AG04449 (cell line): ENCODE measurements at regions of chr3 and their contacts with region 1.

Region 1: GRCh38 chr3:133426721-133427120 is 26.9 kb downstream of the BFSP2 start:
- DNase-seq: peak; percentile 64
- H3K4me3 ChIP-seq: no peak overlapping the region
- CTCF ChIP-seq: no peak

Region 2: DNA sequence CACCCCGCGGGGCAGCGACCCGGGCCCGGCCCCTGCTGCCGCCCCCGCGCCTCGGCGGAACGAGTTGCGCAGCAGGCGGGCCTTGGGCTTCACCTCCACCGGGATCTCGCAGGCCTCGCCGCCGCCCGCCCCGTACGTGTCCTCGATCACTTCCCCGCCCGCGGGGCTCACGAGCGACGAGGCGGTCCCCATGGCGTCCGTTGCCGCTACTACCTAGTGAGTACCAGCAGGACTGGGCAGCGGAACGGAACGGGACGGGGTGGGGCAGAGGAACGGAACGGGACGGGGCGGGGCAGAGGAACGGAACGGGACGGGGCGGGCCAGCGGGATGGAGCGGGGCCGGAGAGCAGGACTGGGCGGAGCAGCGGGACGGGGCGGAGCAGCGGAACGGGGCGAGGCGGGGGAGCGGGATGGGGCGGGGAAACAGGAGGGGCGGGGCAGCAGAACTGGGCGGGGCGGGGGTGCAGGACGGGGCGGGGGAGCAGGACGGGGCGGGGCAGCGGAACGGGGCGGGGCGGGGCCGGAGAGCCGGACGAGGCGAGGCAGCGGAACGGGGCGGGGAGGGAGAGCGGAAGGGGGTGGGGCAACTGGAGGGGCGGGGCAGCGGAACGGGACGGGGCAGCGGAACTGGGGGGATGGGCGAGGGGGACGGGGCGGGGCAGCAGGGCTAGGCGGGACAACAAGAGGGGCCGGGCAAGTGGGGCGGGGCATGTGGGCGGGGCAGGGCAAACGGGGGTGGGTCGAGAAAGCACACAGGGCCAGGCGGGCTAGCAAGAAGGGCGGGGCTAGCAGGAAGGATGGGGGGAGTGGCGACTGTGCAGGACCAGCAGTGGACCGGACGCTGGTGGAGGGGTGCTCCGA is 704.3 kb before region 1 on chr3 and contains the start of gene NPHP3:
- CTCF ChIA-PET with region 1: interaction called, 67 read pairs
- POLR2A ChIA-PET with region 1: no interaction called
- DNase-seq: peak; percentile 78
- H3K4me3 ChIP-seq: peak within 1 kb of the TSS; percentile 79
- CTCF ChIP-seq: no peak

Region 3: DNA sequence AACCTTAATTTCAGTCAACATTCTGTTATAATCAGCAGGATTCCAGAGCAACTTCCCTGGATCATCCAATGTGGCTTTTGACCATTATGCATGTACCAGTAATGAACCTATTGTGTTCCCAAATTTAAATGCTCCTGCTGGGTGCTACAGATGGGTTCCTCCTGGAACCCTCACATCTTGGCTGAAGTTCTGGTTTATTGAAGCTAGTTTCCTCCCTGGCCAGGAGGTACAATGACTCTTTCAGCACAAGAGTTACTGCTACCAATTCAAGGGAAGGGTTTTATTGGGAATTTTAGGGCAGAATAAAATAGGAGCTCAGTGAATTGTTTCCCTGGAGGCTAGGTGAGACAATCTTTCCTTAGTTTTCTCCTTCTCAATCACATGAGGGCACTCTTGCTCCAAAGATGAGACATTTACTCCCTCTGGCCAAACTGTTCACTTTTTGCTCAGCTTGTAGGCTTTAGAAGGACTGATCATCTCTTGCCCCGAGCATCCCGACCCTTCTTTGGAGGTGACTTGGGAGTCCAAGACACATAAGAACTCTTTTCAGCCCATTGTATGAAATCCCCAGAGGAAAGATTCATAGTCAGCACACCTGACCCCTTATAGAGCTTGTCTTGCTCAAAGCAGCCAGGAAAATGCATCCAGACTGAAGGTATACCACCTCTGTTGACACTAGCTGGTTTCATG is 695.7 kb before region 1 on chr3:
- CTCF ChIA-PET with region 1: interaction called, 67 read pairs
- POLR2A ChIA-PET with region 1: no interaction called
- DNase-seq: no peak
- H3K4me3 ChIP-seq: no peak overlapping the region
- CTCF ChIP-seq: peak; percentile 27

Region 4: GRCh38 chr3:133230195-133230594 is 196.5 kb before region 1 on chr3:
- CTCF ChIA-PET with region 1: no interaction called
- POLR2A ChIA-PET with region 1: no interaction called
- DNase-seq: no peak
- H3K4me3 ChIP-seq: no peak overlapping the region
- CTCF ChIP-seq: no peak

Region 5: GRCh38 chr3:133384331-133385027 is 42.2 kb before region 1 on chr3:
- CTCF ChIA-PET with region 1: interaction called, 14 read pairs
- POLR2A ChIA-PET with region 1: no interaction called
- DNase-seq: no peak
- H3K4me3 ChIP-seq: no peak overlapping the region
- CTCF ChIP-seq: peak; percentile 89

Region 6: DNA sequence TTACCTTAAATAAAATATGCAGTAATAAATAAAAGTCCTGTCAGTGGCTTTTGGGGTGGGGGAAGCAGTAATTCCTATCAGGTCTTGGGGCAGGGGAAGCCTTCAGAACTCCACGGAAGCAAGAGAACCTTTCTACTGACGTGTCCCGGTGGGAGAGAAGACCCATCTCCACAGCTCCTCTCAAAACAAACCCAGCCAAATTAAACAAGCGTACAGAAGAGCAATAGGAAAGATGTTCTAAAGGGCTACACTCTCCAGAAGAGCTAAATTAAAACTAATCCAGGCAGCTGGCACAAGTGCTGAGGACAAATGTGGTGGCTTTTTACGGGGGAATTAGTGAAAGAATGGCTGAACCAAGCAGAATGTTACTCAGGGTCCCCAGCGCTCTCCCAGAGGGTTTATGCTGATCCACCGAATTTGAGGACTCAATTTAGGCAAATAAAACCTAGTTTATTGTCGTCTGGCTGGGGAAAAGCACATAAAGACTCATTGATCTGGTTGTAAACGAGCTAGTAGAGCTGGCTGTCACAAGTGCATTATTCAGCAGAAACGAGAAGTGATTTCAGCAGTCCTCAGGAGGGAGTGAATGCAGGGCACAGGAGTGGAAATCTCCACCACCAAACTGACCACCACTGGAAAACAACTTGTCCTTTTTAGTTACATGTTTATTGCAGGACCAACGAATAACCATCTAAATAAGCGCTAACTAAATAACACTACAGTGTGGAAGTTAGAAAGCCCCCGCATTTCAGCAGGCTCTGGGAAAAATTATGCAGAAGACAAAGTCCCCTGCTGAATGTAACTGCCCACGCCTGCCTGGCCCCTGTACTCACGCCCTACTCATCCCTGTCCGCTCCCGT is 13.3 kb before region 1 on chr3:
- CTCF ChIA-PET with region 1: interaction called, 29 read pairs
- POLR2A ChIA-PET with region 1: no interaction called
- DNase-seq: no peak
- H3K4me3 ChIP-seq: peak overlapping the region; percentile 19; the same call in 1 of the 2 replicates
- CTCF ChIP-seq: no peak

Region 7: DNA sequence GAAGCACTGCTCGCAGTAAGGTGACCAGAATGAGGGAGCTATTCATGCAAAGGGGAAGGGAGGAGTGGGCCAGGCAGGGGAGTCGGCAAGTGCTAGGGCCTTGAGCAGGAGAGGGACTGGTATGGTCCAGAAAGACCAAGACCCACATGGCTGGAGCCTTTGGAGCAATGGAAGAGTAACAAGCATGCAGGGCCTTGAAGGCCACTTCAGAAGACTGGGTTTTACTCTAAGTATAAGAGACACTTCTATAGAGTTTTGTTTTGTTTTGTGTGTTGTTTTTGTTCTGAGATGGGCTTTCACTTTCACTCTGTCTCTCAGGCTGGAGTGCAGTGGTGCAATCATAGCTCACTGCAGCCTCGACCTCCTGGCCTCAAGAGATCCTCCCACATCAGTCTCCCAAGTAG is 15.1 kb after region 1 on chr3:
- CTCF ChIA-PET with region 1: interaction called, 12 read pairs
- POLR2A ChIA-PET with region 1: no interaction called
- DNase-seq: no peak
- H3K4me3 ChIP-seq: no peak overlapping the region
- CTCF ChIP-seq: no peak